Activated CD8-positive, alpha-beta memory T cell treated with anti-CD3 and anti-CD28 coated beads, Interleukin-2, amount 10 ng/mL, durations not matched to agents 7 days and 5 days (primary cell): ENCODE measurements at regions of chr9 and their contacts with region 1.

Region 1: GRCh38 chr9:136539427-136540421 is 6.1 kb downstream of the NOTCH1 start:
- DNase-seq: peak; percentile 98
- ATAC-seq: peak; percentile 84
- H3K4me3 Mint-ChIP-seq: peak overlapping the region; percentile 72
- H3K27ac Mint-ChIP-seq: peak overlapping the region; percentile 99
- H3K4me1 Mint-ChIP-seq: peaks cover 66% of the 10 kb centered on the region
- H3K27me3 Mint-ChIP-seq: no peaks in the 10 kb centered on the region

Region 2: DNA sequence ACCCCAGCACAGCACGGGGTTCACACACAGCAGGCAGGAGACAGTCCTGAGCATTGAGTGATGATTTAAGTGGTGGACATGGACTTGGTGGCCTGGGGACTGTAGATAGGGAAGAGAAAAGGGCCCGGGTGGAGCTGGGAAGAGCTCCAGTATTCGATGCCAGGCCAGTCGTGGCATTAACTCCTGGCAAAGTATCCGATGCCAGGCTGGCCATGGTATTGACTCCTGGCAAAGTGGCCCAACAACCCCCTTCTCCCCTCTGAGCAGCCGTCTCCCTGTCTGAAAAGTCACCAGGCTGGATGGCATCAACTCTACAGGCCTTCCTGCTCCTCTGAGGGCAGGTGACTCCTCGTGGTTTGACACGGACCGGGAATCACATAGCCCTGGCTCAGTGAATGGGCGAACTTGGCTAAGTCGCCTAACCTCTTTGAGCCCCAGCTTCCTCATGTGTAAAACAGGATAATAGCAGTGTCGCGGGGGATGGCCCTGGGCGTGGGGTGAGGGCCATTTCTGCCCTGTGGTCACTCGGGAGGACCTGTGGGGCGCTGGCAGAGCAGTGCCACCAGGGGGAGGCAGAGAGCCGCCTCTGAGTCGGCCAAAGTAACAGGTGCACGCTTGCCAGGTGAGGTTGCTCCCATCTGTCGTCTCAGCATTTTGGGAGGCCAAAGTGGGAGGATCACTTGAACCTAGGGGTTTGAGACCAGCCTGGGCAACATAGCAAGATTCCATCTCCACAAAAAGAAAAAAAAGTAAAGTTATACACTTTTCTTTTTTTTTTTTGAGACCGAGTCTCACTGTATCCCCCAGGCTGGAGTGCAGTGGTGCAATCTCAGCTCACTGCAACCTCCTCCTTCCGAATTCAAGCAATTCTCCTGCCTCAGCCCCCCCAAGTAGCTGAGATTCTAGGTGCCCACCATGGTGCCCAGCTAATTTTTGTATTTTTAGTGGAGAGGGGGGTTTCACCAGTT is 51.2 kb before region 1 on chr9:
- CTCF ChIA-PET with region 1: interaction called, 33 read pairs
- DNase-seq: peak; percentile 78
- ATAC-seq: peak; percentile 37
- H3K4me3 Mint-ChIP-seq: no peak overlapping the region
- H3K27ac Mint-ChIP-seq: no peak overlapping the region
- H3K4me1 Mint-ChIP-seq: peaks cover 6% of the 10 kb centered on the region
- H3K27me3 Mint-ChIP-seq: no peaks in the 10 kb centered on the region

Region 3: DNA sequence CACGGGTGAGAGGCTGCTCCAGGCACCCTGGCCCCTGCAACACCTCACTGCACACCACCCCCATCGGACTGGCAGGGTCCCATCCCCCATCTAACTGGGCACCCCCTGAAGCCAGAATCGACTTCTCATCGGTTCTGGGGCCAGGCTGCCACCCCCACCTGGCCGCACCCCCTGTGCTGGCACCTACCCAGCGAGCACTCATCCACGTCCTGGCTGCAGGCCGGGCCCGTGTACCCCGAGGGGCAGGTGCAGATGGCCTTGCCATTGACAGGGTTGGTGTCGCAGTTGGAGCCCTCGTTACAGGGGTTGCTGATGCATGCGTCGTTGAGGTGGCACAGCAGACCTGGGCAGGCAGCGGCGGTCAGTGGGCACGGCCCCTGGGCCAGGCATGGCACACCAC is 21.8 kb before region 1 on chr9:
- CTCF ChIA-PET with region 1: no interaction called
- DNase-seq: no peak
- ATAC-seq: no peak
- H3K4me3 Mint-ChIP-seq: no peak overlapping the region
- H3K27ac Mint-ChIP-seq: no peak overlapping the region
- H3K4me1 Mint-ChIP-seq: no peaks in the 10 kb centered on the region
- H3K27me3 Mint-ChIP-seq: no peaks in the 10 kb centered on the region

Region 4: DNA sequence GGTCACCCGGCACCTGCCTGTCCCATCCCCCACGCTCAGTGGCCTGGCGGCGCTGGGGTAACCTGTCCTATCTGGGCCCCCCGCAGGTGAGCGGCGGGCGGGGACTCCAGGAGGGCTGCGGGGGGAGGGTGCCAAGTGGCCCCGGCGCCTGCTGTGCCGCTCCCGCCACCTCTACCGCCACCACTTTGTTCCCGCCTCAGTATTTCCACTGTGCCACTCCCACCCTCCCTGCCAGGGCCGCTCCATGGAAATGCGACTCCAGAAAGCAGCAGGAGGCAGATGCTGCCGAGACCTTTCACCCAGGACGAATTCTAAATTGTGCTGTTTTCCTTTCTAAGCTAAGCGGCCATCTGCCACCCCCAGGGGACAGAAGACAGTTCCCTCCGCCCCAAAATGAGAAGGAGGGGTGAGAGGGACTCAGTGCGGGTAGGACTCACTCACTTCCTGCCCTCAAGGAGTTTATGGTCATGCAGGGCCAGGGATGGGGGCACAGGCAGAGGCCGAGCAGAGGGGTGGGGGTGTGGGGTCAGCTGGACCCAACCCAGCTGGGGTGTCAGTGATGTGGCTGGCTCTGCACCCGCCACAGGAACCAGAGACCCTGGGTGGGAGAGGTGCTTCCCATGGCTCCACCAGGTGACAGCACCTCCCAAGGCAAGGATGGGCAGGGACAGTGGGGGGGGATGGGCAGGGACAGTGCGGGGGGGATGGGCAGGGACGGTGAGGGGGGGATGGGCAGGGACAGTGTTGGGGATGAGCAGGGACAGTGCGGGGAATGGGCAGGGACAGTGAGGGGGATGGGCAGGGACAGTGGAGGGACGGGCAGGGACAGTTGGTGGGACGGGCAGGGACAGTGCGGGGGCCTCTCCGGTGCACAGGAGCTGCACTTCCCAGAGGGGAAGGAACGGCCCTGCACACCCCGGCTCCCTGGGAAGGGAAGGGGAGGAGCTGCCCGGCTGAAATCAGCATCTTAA is 11.7 kb before region 1 on chr9:
- CTCF ChIA-PET with region 1: interaction called, 10 read pairs
- DNase-seq: no peak
- ATAC-seq: peak; percentile 27
- H3K4me3 Mint-ChIP-seq: no peak overlapping the region
- H3K27ac Mint-ChIP-seq: no peak overlapping the region
- H3K4me1 Mint-ChIP-seq: peaks cover 16% of the 10 kb centered on the region
- H3K27me3 Mint-ChIP-seq: no peaks in the 10 kb centered on the region